ENCODE measurements at regions of chr2 and their contacts with region 1.

Region 1: DNA sequence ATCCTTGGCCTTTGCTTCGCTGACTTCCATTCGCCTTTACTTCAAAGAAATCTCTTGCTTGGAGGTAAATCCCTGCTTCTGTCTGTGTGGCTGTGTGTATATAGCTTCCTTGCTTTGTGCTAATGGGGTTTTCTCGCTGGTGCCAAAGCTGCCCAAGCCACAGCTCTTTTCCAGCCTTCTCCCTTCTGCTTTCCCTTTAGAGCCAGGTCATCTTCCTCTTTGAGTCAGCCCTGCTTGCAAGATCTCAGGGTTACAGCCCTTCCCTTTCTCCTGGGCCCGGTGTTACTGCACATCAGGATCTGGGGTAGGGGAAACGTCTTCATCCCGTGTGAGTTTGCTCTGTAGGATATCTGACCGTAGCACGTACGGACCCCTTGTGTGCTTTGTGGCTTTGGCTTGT is 19.1 kb downstream of the EIF4E2 start:
- DNase-seq: no peak
- H3K4me3 ChIP-seq: no peak overlapping the region
- H3K27ac ChIP-seq: no peak overlapping the region
- H3K4me1 ChIP-seq: no peaks in the 10 kb centered on the region
- H3K27me3 ChIP-seq: no peaks in the 10 kb centered on the region
- CTCF ChIP-seq: no peak
- POLR2A ChIP-seq: no peak

Region 2: GRCh38 chr2:232600053-232600773 is 30.7 kb after region 1 on chr2:
- intact Hi-C with region 1: loop called (anchors 1 kb)
- DNase-seq: no peak
- H3K4me3 ChIP-seq: no peak overlapping the region
- H3K27ac ChIP-seq: no peak overlapping the region
- H3K4me1 ChIP-seq: no peaks in the 10 kb centered on the region
- H3K27me3 ChIP-seq: no peaks in the 10 kb centered on the region
- CTCF ChIP-seq: no peak
- POLR2A ChIP-seq: no peak